ENCODE measurements at regions of chr4 and their contacts with region 1.

Region 1: GRCh38 chr4:124262211-124263179 is 450.0 kb downstream of the ANKRD50 start:
- DNase-seq: peak; percentile 79
- ATAC-seq: peak; percentile 98
- H3K4me3 ChIP-seq: no peak overlapping the region
- H3K27ac ChIP-seq: no peak overlapping the region
- H3K4me1 ChIP-seq: no peaks in the 10 kb centered on the region
- H3K27me3 ChIP-seq: no peaks in the 10 kb centered on the region
- CTCF ChIP-seq: peak; percentile 64 to 92 (median 82); a peak in 5 of 6 replicates
- POLR2A ChIP-seq: no peak
- RAD21 ChIP-seq: peak; percentile 90

Region 2: DNA sequence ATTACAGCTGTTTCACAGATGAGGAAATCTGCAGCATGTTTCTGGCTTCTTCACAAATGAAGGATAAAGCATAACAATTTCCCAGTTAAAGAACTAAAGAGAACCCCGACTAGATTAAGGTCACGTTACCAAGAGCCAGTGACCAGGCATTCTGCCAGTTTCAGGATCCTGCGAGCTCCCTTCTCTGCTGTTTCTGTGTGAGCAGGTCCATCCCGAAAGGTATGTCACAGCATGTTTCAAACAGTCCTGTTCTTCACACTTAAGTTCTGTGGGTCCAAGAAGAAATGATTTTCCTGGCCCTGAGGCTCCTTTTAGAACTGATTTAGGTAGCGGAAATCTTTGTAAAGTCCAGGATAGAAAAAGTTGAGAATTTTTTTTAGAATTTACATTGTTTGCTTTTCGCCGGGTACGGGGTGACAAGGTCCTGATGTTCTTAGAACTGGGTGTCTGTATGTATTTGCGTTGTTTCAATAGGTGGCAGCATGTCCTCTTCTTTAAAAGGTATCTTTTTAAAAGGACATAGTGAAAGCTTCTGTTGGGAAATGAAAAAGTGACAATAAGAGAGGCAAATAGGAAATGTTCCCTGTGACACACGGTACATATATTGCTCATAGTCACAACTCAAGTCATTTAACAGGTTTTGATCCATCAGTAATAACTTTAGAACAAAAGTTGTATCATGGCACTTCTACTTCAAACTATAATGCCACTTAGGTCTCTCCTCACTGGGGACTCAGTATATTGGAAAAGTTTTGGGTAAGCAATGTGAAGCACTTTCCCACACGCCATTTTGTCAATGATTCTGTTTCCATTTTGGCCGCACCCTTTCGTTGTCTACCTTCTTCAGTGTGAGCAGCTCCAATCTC is 1660.0 kb before region 1 on chr4:
- CTCF ChIA-PET with region 1: no interaction called
- POLR2A ChIA-PET with region 1: no interaction called
- RAD21 ChIA-PET with region 1: no interaction called
- intact Hi-C with region 1: loop called (anchors 10 kb)
- DNase-seq: peak; percentile 49
- ATAC-seq: peak; percentile 94
- H3K4me3 ChIP-seq: peak overlapping the region; percentile 21 to 31
- H3K27ac ChIP-seq: no peak overlapping the region
- H3K4me1 ChIP-seq: peaks cover 0 to 8% of the 10 kb centered on the region in 2 experiments; a peak in 1 of 4 replicates
- H3K27me3 ChIP-seq: no peaks in the 10 kb centered on the region
- CTCF ChIP-seq: peak; percentile 40 to 68 (median 53)
- POLR2A ChIP-seq: no peak
- RAD21 ChIP-seq: peak; percentile 82

Region 3: GRCh38 chr4:123102897-123103471 is 1159.5 kb before region 1 on chr4:
- CTCF ChIA-PET with region 1: interaction called, 3 read pairs
- POLR2A ChIA-PET with region 1: no interaction called
- RAD21 ChIA-PET with region 1: no interaction called
- intact Hi-C with region 1: loop called (anchors 1 kb)
- DNase-seq: peak; percentile 19
- ATAC-seq: peak; percentile 79
- H3K4me3 ChIP-seq: no peak overlapping the region
- H3K27ac ChIP-seq: no peak overlapping the region
- H3K4me1 ChIP-seq: no peaks in the 10 kb centered on the region
- H3K27me3 ChIP-seq: no peaks in the 10 kb centered on the region
- CTCF ChIP-seq: peak; percentile 42 to 74 (median 53); a peak in 5 of 6 replicates
- POLR2A ChIP-seq: no peak
- RAD21 ChIP-seq: peak; percentile 73

Region 4: GRCh38 chr4:123390846-123391456 is 871.5 kb before region 1 on chr4:
- CTCF ChIA-PET with region 1: no interaction called
- POLR2A ChIA-PET with region 1: no interaction called
- RAD21 ChIA-PET with region 1: no interaction called
- intact Hi-C with region 1: loop called (anchors 5 kb)
- DNase-seq: peak; percentile 4
- ATAC-seq: no peak; the same call in 1 of the 2 replicates
- H3K4me3 ChIP-seq: no peak overlapping the region
- H3K27ac ChIP-seq: no peak overlapping the region
- H3K4me1 ChIP-seq: no peaks in the 10 kb centered on the region
- H3K27me3 ChIP-seq: no peaks in the 10 kb centered on the region
- CTCF ChIP-seq: peak; percentile 32 to 60 (median 56); a peak in 5 of 6 replicates
- POLR2A ChIP-seq: no peak
- RAD21 ChIP-seq: peak; percentile 55

Region 5: GRCh38 chr4:123776254-123776653 is 486.2 kb before region 1 on chr4:
- CTCF ChIA-PET with region 1: interaction called, 4 read pairs
- POLR2A ChIA-PET with region 1: no interaction called
- RAD21 ChIA-PET with region 1: no interaction called
- intact Hi-C with region 1: loop called (anchors 1 kb)
- DNase-seq: no peak
- ATAC-seq: no peak
- H3K4me3 ChIP-seq: no peak overlapping the region
- H3K27ac ChIP-seq: no peak overlapping the region
- H3K4me1 ChIP-seq: no peaks in the 10 kb centered on the region
- H3K27me3 ChIP-seq: no peaks in the 10 kb centered on the region
- CTCF ChIP-seq: no peak
- POLR2A ChIP-seq: no peak
- RAD21 ChIP-seq: no peak

Region 6: DNA sequence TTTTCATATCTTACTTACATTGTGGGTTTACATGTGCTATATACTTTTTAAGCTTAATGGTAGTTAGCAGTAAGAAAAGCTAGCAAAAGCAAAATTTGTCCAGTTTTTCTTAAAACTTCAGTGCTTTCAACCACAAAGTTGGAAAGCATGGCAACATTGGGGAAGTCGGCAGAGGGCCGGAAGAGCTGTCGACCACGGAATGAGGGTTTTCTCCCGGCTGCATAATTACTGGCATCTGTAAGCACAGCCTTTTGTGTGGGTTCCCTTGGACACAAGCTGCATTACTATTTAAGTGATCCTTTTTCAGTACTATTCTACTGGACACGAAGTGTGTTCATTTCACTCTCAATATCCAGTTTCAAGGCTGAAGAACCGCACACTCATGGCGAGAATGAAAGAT is 110.4 kb before region 1 on chr4:
- CTCF ChIA-PET with region 1: no interaction called
- POLR2A ChIA-PET with region 1: no interaction called
- RAD21 ChIA-PET with region 1: no interaction called
- intact Hi-C with region 1: no loop called
- DNase-seq: no peak
- ATAC-seq: no peak
- H3K4me3 ChIP-seq: no peak overlapping the region
- H3K27ac ChIP-seq: no peak overlapping the region
- H3K4me1 ChIP-seq: no peaks in the 10 kb centered on the region
- H3K27me3 ChIP-seq: no peaks in the 10 kb centered on the region
- CTCF ChIP-seq: no peak
- POLR2A ChIP-seq: no peak
- RAD21 ChIP-seq: no peak

Region 7: DNA sequence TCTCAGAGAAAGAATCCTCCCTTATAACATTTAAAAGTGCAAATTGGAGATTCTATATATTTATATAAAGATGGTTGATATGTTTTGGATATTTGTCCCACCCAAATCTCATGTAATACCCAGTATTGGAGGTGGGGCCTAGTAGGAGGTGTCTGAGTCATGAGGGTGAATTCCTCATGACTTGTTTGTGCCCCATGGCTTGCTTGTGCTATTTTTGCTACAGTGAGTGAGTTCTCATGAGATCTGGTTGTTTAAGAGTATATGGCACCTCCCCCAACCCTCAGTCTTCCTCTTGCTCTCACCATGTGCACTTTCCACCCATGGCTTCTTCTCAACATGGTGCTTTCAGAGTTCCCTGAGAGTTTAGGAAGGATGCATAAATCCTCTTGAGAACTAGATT is 459.6 kb after region 1 on chr4:
- CTCF ChIA-PET with region 1: no interaction called
- POLR2A ChIA-PET with region 1: no interaction called
- RAD21 ChIA-PET with region 1: no interaction called
- intact Hi-C with region 1: no loop called
- DNase-seq: no peak
- ATAC-seq: no peak
- H3K4me3 ChIP-seq: no peak overlapping the region
- H3K27ac ChIP-seq: no peak overlapping the region
- H3K4me1 ChIP-seq: peaks cover 0 to 13% of the 10 kb centered on the region in 2 experiments; a peak in 2 of 4 replicates
- H3K27me3 ChIP-seq: no peaks in the 10 kb centered on the region
- CTCF ChIP-seq: no peak
- POLR2A ChIP-seq: no peak
- RAD21 ChIP-seq: no peak